Natural killer cell (primary cell): ENCODE measurements at regions of chr3 and their contacts with region 1.

Region 1: DNA sequence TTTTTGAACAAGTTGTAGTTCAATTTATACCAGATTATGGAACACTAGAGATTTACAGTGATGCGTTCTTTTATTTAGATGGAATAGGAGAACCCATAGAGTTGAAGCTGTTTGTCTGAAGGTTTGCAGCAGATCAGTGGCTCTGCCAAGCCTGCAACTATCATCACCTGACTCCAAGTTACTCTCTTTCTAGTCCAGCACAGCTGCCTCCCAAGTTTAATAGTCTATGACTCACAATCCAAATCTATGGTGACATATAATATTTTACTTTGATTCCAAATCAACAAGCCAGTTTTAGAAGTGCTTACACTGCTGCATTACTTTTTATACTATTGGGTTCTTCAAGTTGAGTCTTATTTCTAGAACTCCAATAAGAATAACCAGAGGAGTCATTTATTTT is 400.4 kb downstream of the LPP start:
- DNase-seq: no peak
- ATAC-seq: peak in 1 of 3 donors; percentile 13
- H3K4me3 ChIP-seq: no peak overlapping the region
- H3K4me3 Mint-ChIP-seq: no peak overlapping the region
- H3K27ac ChIP-seq: peak overlapping the region; percentile 79
- H3K27ac Mint-ChIP-seq: no peak overlapping the region
- H3K4me1 ChIP-seq: peaks cover 23% of the 10 kb centered on the region
- H3K4me1 Mint-ChIP-seq: peaks cover 0 to 26% of the 10 kb centered on the region in 2 donors
- H3K27me3 ChIP-seq: no peaks in the 10 kb centered on the region
- H3K27me3 Mint-ChIP-seq: no peaks in the 10 kb centered on the region
- CTCF ChIP-seq: no peak

Region 2: GRCh38 chr3:187919048-187919447 is 635.4 kb before region 1 on chr3:
- intact Hi-C with region 1: loop called (anchors 5 kb)
- DNase-seq: peak; percentile 38 to 80
- ATAC-seq: peak; percentile 87 to 88 (median 87)
- H3K4me3 ChIP-seq: peak overlapping the region; percentile 5
- H3K4me3 Mint-ChIP-seq: peak overlapping the region; percentile 80
- H3K27ac ChIP-seq: peak overlapping the region; percentile 85
- H3K27ac Mint-ChIP-seq: peak overlapping the region; percentile 86 to 88
- H3K4me1 ChIP-seq: peaks cover 18% of the 10 kb centered on the region
- H3K4me1 Mint-ChIP-seq: peaks cover 39 to 46% of the 10 kb centered on the region in 2 donors
- H3K27me3 ChIP-seq: no peaks in the 10 kb centered on the region
- H3K27me3 Mint-ChIP-seq: no peaks in the 10 kb centered on the region
- CTCF ChIP-seq: no peak

Region 3: DNA sequence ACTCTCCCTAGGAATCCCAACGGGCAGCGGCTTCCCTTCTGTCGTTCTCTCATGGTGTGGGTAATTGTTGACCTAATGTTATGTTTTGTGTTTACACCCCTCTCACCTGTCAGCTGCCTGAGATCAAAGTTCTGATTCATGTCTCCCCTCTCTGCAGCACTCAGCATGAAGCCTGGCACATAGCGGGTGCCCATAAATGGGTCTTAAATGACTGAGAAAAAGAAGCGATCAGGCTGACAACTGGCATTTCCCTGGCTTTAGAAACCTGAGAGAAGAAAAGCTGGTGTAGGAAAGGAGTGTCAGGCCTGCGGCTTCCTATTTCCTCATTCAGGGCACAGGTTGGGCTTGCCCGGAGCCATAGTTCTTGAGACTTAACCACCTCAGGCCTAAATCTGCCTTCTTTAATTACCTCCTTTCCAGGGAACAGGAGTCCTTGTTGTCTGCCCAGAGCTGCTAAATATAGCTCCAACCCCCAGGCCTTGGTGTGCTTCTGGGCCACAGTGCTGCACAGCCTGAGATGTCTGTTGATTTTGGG is 368.6 kb before region 1 on chr3:
- intact Hi-C with region 1: loop called (anchors 5 kb)
- DNase-seq: peak in 1 of 2 donors; percentile 18
- ATAC-seq: no peak
- H3K4me3 ChIP-seq: no peak overlapping the region
- H3K4me3 Mint-ChIP-seq: no peak overlapping the region
- H3K27ac ChIP-seq: no peak overlapping the region
- H3K27ac Mint-ChIP-seq: peak overlapping the region in 1 of 2 donors; percentile 15
- H3K4me1 ChIP-seq: peaks cover 23% of the 10 kb centered on the region
- H3K4me1 Mint-ChIP-seq: peaks cover 58 to 67% of the 10 kb centered on the region in 2 donors
- H3K27me3 ChIP-seq: no peaks in the 10 kb centered on the region
- H3K27me3 Mint-ChIP-seq: no peaks in the 10 kb centered on the region
- CTCF ChIP-seq: no peak

Region 4: GRCh38 chr3:188358787-188359493 is 195.5 kb before region 1 on chr3:
- intact Hi-C with region 1: loop called (anchors 1 kb)
- DNase-seq: peak; percentile 30 to 72
- ATAC-seq: peak; percentile 78 to 88 (median 85)
- H3K4me3 ChIP-seq: peak overlapping the region; percentile 14
- H3K4me3 Mint-ChIP-seq: peak overlapping the region; percentile 78
- H3K27ac ChIP-seq: peak overlapping the region; percentile 78
- H3K27ac Mint-ChIP-seq: peak overlapping the region; percentile 74 to 79
- H3K4me1 ChIP-seq: peaks cover 29% of the 10 kb centered on the region
- H3K4me1 Mint-ChIP-seq: peaks cover 52 to 56% of the 10 kb centered on the region in 2 donors
- H3K27me3 ChIP-seq: no peaks in the 10 kb centered on the region
- H3K27me3 Mint-ChIP-seq: peaks cover 0 to 7% of the 10 kb centered on the region in 2 donors
- CTCF ChIP-seq: no peak

Region 5: GRCh38 chr3:188568736-188569135 is 14.3 kb after region 1 on chr3:
- intact Hi-C with region 1: loop called (anchors 1 kb)
- DNase-seq: peak in 1 of 2 donors; percentile 45
- ATAC-seq: peak; percentile 94 to 99 (median 96)
- H3K4me3 ChIP-seq: no peak overlapping the region
- H3K4me3 Mint-ChIP-seq: peak overlapping the region; percentile 11
- H3K27ac ChIP-seq: peak overlapping the region; percentile 28
- H3K27ac Mint-ChIP-seq: peak overlapping the region; percentile 73 to 83
- H3K4me1 ChIP-seq: peaks cover 11% of the 10 kb centered on the region
- H3K4me1 Mint-ChIP-seq: peaks cover 26 to 30% of the 10 kb centered on the region in 2 donors
- H3K27me3 ChIP-seq: no peaks in the 10 kb centered on the region
- H3K27me3 Mint-ChIP-seq: no peaks in the 10 kb centered on the region
- CTCF ChIP-seq: no peak